Gastrocnemius medialis (tissue), 4 donors: ENCODE measurements at regions of chr15 and their contacts with region 1.

Region 1: GRCh38 chr15:72155635-72156616 is 37.7 kb downstream of the SENP8 start:
- DNase-seq: peak; percentile 65 to 74
- ATAC-seq: peak; percentile 95 to 98
- H3K4me3 ChIP-seq: peak overlapping the region; percentile 59 to 81 (median 62)
- H3K27ac ChIP-seq: peak overlapping the region; percentile 39 to 67 (median 58)
- H3K4me1 ChIP-seq: peaks cover 0 to 10% of the 10 kb centered on the region in 2 donors
- H3K27me3 ChIP-seq: no peaks in the 10 kb centered on the region
- CTCF ChIP-seq: peak; percentile 81 to 88 (median 85)
- POLR2A ChIP-seq: no peak

Region 2: DNA sequence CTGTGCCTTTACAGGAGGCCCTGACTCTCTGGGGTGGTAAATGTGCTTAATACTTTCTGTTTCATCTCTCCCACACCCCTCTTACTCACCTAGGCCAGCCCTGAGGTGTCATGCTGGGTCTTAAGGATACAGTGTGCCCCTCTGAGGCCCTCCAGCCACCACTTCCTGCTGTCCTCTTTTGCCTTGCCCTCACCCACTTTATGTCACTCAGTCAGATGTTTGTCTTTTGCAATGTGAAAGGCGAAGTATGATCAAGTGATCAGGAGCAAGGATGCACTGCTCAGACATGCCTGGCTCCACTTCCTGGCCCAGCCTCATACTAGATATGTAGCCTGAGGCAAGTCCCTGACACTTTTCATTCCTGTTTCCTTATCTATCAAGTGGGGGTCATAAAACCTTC is 684.6 kb before region 1 on chr15:
- in situ Hi-C with region 1: loop called in 1 of 4 experiments (anchors 25 kb)
- intact Hi-C with region 1: no loop called
- DNase-seq: no peak
- ATAC-seq: no peak
- H3K4me3 ChIP-seq: no peak overlapping the region
- H3K27ac ChIP-seq: no peak overlapping the region
- H3K4me1 ChIP-seq: no peaks in the 10 kb centered on the region
- H3K27me3 ChIP-seq: no peaks in the 10 kb centered on the region
- CTCF ChIP-seq: no peak
- POLR2A ChIP-seq: no peak

Region 3: GRCh38 chr15:71743861-71744382 is 412.0 kb before region 1 on chr15:
- in situ Hi-C with region 1: loop called in 3 of 4 experiments (anchors 5 to 10 kb)
- intact Hi-C with region 1: loop called (anchors 2 kb)
- DNase-seq: no peak
- ATAC-seq: no peak
- H3K4me3 ChIP-seq: no peak overlapping the region
- H3K27ac ChIP-seq: no peak overlapping the region
- H3K4me1 ChIP-seq: peaks cover 0 to 10% of the 10 kb centered on the region in 2 donors
- H3K27me3 ChIP-seq: no peaks in the 10 kb centered on the region
- CTCF ChIP-seq: peak; percentile 58 to 79 (median 65)
- POLR2A ChIP-seq: no peak

Region 4: DNA sequence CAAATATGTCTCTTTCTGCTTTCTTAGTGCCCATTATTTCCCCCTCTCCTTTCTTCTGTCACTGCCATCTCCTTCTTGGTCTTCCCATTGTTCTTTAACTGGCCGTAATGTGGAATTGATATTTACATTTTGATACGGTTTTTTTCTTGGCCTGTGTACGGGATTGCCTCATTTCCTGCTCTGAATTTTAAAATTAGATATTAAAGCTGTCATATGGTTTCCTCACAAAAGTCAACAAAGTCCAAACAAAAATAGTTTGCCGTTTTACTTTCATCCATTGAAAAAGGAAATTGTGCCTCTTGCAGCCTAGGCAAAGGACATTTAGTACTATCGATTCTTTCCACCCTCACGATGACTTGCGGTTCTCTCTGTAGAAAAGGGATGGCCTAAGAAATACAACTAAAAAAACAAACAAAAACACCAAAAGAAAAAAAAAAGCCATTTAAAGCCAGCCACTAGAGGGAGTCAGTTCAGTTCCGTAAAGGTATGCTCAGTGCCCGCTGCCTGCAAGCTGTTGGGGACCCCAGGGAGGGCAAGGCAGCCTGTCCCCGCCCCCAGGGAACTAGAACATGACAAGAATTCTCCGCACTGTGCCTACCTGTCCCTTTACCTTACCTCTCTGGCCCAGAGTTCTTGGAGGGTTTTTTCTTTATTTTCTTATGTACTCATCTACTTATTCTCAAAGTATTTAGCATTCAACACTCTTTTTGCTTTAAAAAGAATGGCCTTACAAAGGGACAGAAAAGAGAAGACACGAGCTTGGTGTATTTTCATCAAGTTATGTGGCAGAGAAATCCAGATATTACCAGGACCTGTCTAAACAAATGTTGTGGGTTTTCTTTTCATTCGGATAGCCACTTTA is 375.6 kb before region 1 on chr15:
- in situ Hi-C with region 1: no loop called
- intact Hi-C with region 1: loop called (anchors 1 kb)
- DNase-seq: no peak
- ATAC-seq: no peak
- H3K4me3 ChIP-seq: peak overlapping the region in 1 of 4 donors; percentile 22
- H3K27ac ChIP-seq: no peak overlapping the region
- H3K4me1 ChIP-seq: peaks cover 7 to 9% of the 10 kb centered on the region in 2 donors
- H3K27me3 ChIP-seq: no peaks in the 10 kb centered on the region
- CTCF ChIP-seq: peak in 4 of 5 experiments; percentile 18 to 70 (median 46)
- POLR2A ChIP-seq: no peak

Region 5: GRCh38 chr15:71891026-71891425 is 264.9 kb before region 1 on chr15:
- in situ Hi-C with region 1: loop called in 2 of 4 experiments (anchors 25 kb)
- intact Hi-C with region 1: loop called (anchors 2 kb)
- DNase-seq: peak in 1 of 2 donors; percentile 45
- ATAC-seq: peak; percentile 88 to 97
- H3K4me3 ChIP-seq: no peak overlapping the region
- H3K27ac ChIP-seq: peak overlapping the region in 1 of 4 donors; percentile 8
- H3K4me1 ChIP-seq: peaks cover 9 to 16% of the 10 kb centered on the region in 2 donors
- H3K27me3 ChIP-seq: no peaks in the 10 kb centered on the region
- CTCF ChIP-seq: no peak
- POLR2A ChIP-seq: no peak